A673 (cell line): ENCODE measurements at regions of chrX and their contacts with region 1.

Region 1: GRCh38 chrX:37509349-37509748 is 62.1 kb upstream of the LANCL3 start:
- DNase-seq: peak; percentile 27
- H3K4me3 ChIP-seq: no peak overlapping the region
- H3K27ac ChIP-seq: no peak overlapping the region
- H3K4me1 ChIP-seq: no peaks in the 10 kb centered on the region
- H3K27me3 ChIP-seq: no peaks in the 10 kb centered on the region
- CTCF ChIP-seq: peak; percentile 52

Region 2: DNA sequence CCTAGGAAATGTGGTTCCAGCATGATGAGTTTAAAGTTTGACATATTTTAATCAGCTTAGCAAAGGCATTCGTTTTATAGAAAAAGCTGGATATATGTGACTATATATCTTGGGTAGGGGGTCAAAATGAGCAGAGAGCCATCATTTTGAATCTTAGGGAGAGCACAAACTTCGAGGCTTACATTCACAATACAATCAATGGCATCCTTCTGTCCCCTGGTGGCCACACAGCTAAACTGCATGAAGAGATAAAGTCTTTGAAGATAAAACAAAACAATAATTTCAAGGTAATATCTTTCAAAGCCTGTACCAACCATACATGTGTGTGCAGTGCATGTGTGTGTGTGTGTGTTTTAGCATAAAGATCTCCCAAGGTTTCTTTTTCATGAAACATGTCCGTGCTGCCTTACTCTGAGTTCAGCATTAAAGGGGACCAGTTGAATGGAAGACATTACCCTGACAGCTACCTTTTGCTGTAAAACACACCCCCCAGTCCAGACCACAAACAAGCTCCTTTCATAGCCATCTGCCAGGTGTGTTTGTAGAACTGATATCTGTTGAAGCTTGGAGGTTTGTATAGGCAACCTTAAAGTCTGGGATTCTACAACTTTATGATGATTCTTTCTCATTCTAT is 316.0 kb after region 1 on chrX:
- CTCF ChIA-PET with region 1: no interaction called
- POLR2A ChIA-PET with region 1: no interaction called
- intact Hi-C with region 1: loop called (anchors 5 kb)
- DNase-seq: peak; percentile 56
- H3K4me3 ChIP-seq: no peak overlapping the region
- H3K27ac ChIP-seq: no peak overlapping the region
- H3K4me1 ChIP-seq: no peaks in the 10 kb centered on the region
- H3K27me3 ChIP-seq: no peaks in the 10 kb centered on the region
- CTCF ChIP-seq: peak; percentile 89

Region 3: GRCh38 chrX:38166478-38167083 is 657.2 kb after region 1 on chrX:
- CTCF ChIA-PET with region 1: no interaction called
- POLR2A ChIA-PET with region 1: no interaction called
- intact Hi-C with region 1: loop called (anchors 5 kb)
- DNase-seq: peak; percentile 54
- H3K4me3 ChIP-seq: no peak overlapping the region
- H3K27ac ChIP-seq: no peak overlapping the region
- H3K4me1 ChIP-seq: no peaks in the 10 kb centered on the region
- H3K27me3 ChIP-seq: no peaks in the 10 kb centered on the region
- CTCF ChIP-seq: peak; percentile 79